ENCODE measurements at regions of chr19 and their contacts with region 1.

Region 1: DNA sequence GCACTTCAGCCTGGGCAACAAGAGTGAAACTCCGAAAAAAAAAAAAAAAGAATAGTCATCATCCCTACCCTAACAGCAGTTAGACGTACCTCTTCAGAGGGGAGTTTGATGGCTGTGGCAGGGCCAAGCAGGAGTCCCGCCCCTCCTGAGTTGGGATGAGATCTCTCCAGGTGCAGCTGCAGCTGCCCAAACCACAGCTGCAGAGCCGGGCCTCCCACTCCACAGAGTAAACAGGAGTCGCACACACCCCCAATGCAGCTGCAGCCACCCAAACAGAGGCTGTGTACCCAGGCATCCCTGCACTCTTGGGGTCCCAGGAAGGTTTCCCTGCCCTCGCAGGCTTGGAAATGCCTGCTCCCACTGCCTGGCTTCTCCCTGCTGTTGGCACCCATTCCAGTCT is 17.4 kb upstream of the MLLT1 start:
- DNase-seq: no peak
- ATAC-seq: no peak

Region 2: GRCh38 chr19:6125571-6125989 is 171.6 kb before region 1 on chr19:
- intact Hi-C with region 1: loop called in 1 of 2 experiments (anchors 5 kb)
- DNase-seq: peak; percentile 45
- ATAC-seq: peak; percentile 78 to 90

Region 3: GRCh38 chr19:6167115-6167514 is 130.1 kb before region 1 on chr19:
- intact Hi-C with region 1: loop called in 1 of 2 experiments (anchors 2 kb)
- DNase-seq: no peak
- ATAC-seq: no peak

Region 4: GRCh38 chr19:6218491-6219162 is 78.6 kb before region 1 on chr19:
- intact Hi-C with region 1: loop called (anchors 2 to 5 kb)
- DNase-seq: peak; percentile 91
- ATAC-seq: peak; percentile 66 to 70

Measured in left cardiac atrium (tissue), 4 donors.